ENCODE measurements at regions of chr17 and their contacts with region 1.

Region 1: GRCh38 chr17:59859444-59860025 is 33.2 kb downstream of the TUBD1 start:
- DNase-seq: no peak
- H3K4me3 ChIP-seq: no peak overlapping the region
- CTCF ChIP-seq: peak; percentile 45

Region 2: GRCh38 chr17:59001158-59001814 is 858.2 kb before region 1 on chr17:
- CTCF ChIA-PET with region 1: no interaction called
- POLR2A ChIA-PET with region 1: no interaction called
- DNase-seq: no peak
- H3K4me3 ChIP-seq: no peak overlapping the region
- CTCF ChIP-seq: no peak

Region 3: GRCh38 chr17:59702304-59702703 is 157.2 kb before region 1 on chr17:
- CTCF ChIA-PET with region 1: interaction called, 11 read pairs
- POLR2A ChIA-PET with region 1: interaction called, 4 read pairs
- DNase-seq: no peak
- H3K4me3 ChIP-seq: no peak overlapping the region
- CTCF ChIP-seq: no peak

Region 4: GRCh38 chr17:59778996-59779395 is 80.5 kb before region 1 on chr17:
- CTCF ChIA-PET with region 1: no interaction called
- POLR2A ChIA-PET with region 1: no interaction called
- DNase-seq: no peak
- H3K4me3 ChIP-seq: no peak overlapping the region
- CTCF ChIP-seq: no peak

Region 5: GRCh38 chr17:59870482-59870881 is 10.9 kb after region 1 on chr17:
- CTCF ChIA-PET with region 1: interaction called, 22 read pairs
- POLR2A ChIA-PET with region 1: interaction called, 3 read pairs
- DNase-seq: no peak
- H3K4me3 ChIP-seq: no peak overlapping the region
- CTCF ChIP-seq: no peak

Region 6: GRCh38 chr17:59899103-59899502 is 39.6 kb after region 1 on chr17:
- CTCF ChIA-PET with region 1: no interaction called
- POLR2A ChIA-PET with region 1: no interaction called
- DNase-seq: no peak
- H3K4me3 ChIP-seq: no peak overlapping the region
- CTCF ChIP-seq: no peak

Measured in AG04449 (cell line).